IMR-90 (cell line): ENCODE measurements at regions of chr7 and their contacts with region 1.

Region 1: GRCh38 chr7:104267701-104268368 is 60.0 kb upstream of the ORC5 start:
- DNase-seq: peak; percentile 28
- ATAC-seq: peak; percentile 49; the same call in 1 of the 2 replicates
- H3K4me3 ChIP-seq: no peak overlapping the region
- H3K27ac ChIP-seq: no peak overlapping the region
- H3K4me1 ChIP-seq: no peaks in the 10 kb centered on the region
- H3K27me3 ChIP-seq: no peaks in the 10 kb centered on the region
- CTCF ChIP-seq: peak; percentile 56
- POLR2A ChIP-seq: no peak
- RAD21 ChIP-seq: peak; percentile 29

Region 2: DNA sequence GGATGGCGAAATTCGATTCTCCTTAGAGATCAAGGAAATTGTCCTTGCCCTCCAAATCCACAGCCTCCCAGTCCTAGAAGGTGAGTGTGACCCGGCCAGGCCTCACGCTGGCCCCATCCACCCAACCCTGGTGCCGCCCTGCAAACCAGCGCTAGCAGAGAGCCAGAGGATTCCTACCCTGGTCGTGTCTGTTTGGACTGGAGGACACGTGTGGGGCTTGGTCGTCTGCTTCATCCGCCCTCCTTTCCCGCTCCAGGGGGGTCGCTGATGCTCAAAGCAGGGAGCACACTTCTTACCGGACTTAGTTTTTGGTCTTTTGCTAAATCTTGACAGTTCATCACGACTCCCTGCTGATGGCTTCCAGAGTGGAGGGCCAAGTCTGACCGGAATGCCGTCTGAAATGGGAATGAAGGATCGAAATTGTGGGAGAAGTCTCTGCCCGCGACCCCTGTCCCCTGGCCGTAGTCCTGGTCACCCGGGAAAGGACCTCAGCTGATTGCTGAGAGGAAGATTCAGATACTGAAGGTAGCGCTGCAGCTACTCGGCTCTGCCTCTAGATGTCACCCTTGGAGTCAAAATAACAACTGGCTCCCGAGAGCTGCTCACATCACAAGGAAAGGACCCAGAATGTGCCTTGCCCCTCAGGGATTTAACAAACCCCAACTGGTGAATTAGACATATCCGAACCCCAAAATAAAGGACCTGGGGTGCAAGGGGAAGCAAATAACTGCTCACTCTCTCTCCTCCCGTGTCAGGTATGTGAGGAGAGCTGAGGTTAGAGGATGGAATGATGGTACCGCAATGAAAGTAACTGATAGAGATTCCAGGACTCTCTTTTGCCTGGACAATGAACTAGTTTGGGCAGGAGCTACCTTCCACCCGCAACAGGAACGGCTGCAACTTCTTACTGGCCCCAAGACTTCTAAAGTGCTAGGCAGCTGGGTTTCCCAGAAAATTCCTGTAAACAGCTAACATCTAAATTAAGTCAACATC is 36.5 kb before region 1 on chr7:
- CTCF ChIA-PET with region 1: interaction called, 9 read pairs
- POLR2A ChIA-PET with region 1: no interaction called
- dilution Hi-C with region 1: no loop called
- in situ Hi-C with region 1: no loop called
- intact Hi-C with region 1: loop called (anchors 1 kb)
- DNase-seq: peak; percentile 58
- ATAC-seq: peak; percentile 100
- H3K4me3 ChIP-seq: no peak overlapping the region
- H3K27ac ChIP-seq: no peak overlapping the region
- H3K4me1 ChIP-seq: no peaks in the 10 kb centered on the region
- H3K27me3 ChIP-seq: 0 out of 2 replicates have a peak, but pooled peaks cover 2% of the 10 kb centered on the region
- CTCF ChIP-seq: peak; percentile 76
- POLR2A ChIP-seq: no peak
- RAD21 ChIP-seq: peak; percentile 69